HCT116 (cell line): ENCODE measurements at regions of chr17 and their contacts with region 1.

Region 1: DNA sequence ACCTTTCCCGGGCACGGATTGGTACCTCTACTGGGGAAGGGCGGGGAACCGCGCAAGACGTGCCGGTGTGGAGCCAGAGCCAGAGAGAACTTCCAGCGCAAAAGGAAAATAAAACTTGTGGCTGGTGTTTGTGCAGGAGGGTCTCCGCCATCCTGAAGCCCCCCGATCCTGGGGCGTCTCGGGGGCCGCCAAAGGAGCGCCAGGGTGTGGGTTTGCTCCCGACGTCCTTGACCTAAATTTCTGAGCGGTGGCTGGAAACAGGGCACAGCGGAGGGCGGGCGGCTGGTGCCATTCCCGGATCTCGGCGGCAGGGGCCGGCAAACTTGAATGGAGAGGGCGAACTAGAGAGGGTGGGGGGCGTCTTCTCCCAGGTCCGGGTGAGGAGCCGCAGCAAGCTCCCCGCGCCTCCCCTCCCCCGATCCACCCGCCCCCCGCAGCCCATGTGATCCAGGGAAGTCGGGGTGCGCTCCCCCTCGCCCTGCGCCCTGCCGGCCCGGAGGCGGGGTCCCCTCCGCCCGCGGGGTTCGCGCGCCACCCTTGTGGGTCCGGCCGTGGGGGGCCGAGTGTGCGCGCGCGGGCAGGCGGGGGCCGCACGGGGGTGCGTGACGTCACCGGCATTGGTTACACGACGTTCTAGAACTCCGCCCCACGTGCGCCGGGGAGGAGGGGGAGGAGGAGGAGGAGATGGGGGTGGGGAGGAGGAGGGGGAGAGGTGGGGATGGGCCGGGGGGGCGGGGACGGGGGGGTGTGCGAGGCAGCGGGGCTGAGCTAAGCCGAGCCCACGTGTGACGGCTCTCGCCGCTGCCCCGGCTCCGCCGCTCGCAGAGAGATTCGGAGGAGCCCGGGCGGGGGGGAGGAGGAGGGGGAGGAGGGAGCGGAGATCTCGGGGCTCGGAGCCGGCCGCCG is at the start of gene MSI2:
- DNase-seq: peak; percentile 75
- ATAC-seq: peak; percentile 82
- H3K4me3 ChIP-seq: peak within 1 kb of the TSS; percentile 65 to 72
- H3K27ac ChIP-seq: peak within 1 kb of the TSS; percentile 60
- H3K4me1 ChIP-seq: peaks cover 13 to 27% of the 10 kb centered on the region in 2 experiments
- H3K27me3 ChIP-seq: no peaks in the 10 kb centered on the region
- CTCF ChIP-seq: no peak
- POLR2A ChIP-seq: peak; percentile 34
- RAD21 ChIP-seq: no peak
- total RNA-seq, gene MSI2: 137 TPM

Region 2: GRCh38 chr17:57186226-57187019 is 69.6 kb before region 1 on chr17:
- CTCF ChIA-PET with region 1: no interaction called
- POLR2A ChIA-PET with region 1: no interaction called
- RAD21 ChIA-PET with region 1: no interaction called
- intact Hi-C with region 1: no loop called
- DNase-seq: no peak
- ATAC-seq: no peak
- H3K4me3 ChIP-seq: no peak overlapping the region
- H3K27ac ChIP-seq: no peak overlapping the region
- H3K4me1 ChIP-seq: no peaks in the 10 kb centered on the region
- H3K27me3 ChIP-seq: no peaks in the 10 kb centered on the region
- CTCF ChIP-seq: no peak
- POLR2A ChIP-seq: no peak
- RAD21 ChIP-seq: no peak

Region 3: GRCh38 chr17:57234751-57235117 is 21.3 kb before region 1 on chr17:
- CTCF ChIA-PET with region 1: no interaction called
- POLR2A ChIA-PET with region 1: no interaction called
- RAD21 ChIA-PET with region 1: no interaction called
- intact Hi-C with region 1: no loop called
- DNase-seq: no peak
- ATAC-seq: peak; percentile 38; the same call in 1 of the 2 replicates
- H3K4me3 ChIP-seq: no peak overlapping the region
- H3K27ac ChIP-seq: no peak overlapping the region
- H3K4me1 ChIP-seq: no peaks in the 10 kb centered on the region
- H3K27me3 ChIP-seq: no peaks in the 10 kb centered on the region
- CTCF ChIP-seq: peak in 2 of 3 experiments; percentile 15 to 16; a peak in 2 of 6 replicates
- POLR2A ChIP-seq: no peak
- RAD21 ChIP-seq: peak; percentile 20; the same call in 1 of the 2 replicates

Region 4: GRCh38 chr17:57370037-57370581 is 114.1 kb after region 1 on chr17:
- CTCF ChIA-PET with region 1: no interaction called
- POLR2A ChIA-PET with region 1: no interaction called
- RAD21 ChIA-PET with region 1: no interaction called
- intact Hi-C with region 1: loop called (anchors 5 kb)
- DNase-seq: no peak
- ATAC-seq: peak; percentile 27
- H3K4me3 ChIP-seq: no peak overlapping the region
- H3K27ac ChIP-seq: peak overlapping the region; percentile 11; the same call in 1 of the 2 replicates
- H3K4me1 ChIP-seq: peaks cover 63 to 86% of the 10 kb centered on the region in 2 experiments
- H3K27me3 ChIP-seq: no peaks in the 10 kb centered on the region
- CTCF ChIP-seq: no peak
- POLR2A ChIP-seq: no peak
- RAD21 ChIP-seq: no peak

Region 5: GRCh38 chr17:57422574-57423164 is 166.6 kb after region 1 on chr17:
- CTCF ChIA-PET with region 1: no interaction called
- POLR2A ChIA-PET with region 1: no interaction called
- RAD21 ChIA-PET with region 1: no interaction called
- intact Hi-C with region 1: loop called (anchors 5 kb)
- DNase-seq: peak; percentile 89
- ATAC-seq: peak; percentile 87
- H3K4me3 ChIP-seq: peak overlapping the region in 1 of 2 experiments; percentile 37; a peak in 2 of 4 replicates
- H3K27ac ChIP-seq: peak overlapping the region; percentile 78
- H3K4me1 ChIP-seq: peaks cover 70 to 71% of the 10 kb centered on the region in 2 experiments
- H3K27me3 ChIP-seq: no peaks in the 10 kb centered on the region
- CTCF ChIP-seq: no peak
- POLR2A ChIP-seq: no peak
- RAD21 ChIP-seq: peak; percentile 39; the same call in 1 of the 2 replicates

Region 6: DNA sequence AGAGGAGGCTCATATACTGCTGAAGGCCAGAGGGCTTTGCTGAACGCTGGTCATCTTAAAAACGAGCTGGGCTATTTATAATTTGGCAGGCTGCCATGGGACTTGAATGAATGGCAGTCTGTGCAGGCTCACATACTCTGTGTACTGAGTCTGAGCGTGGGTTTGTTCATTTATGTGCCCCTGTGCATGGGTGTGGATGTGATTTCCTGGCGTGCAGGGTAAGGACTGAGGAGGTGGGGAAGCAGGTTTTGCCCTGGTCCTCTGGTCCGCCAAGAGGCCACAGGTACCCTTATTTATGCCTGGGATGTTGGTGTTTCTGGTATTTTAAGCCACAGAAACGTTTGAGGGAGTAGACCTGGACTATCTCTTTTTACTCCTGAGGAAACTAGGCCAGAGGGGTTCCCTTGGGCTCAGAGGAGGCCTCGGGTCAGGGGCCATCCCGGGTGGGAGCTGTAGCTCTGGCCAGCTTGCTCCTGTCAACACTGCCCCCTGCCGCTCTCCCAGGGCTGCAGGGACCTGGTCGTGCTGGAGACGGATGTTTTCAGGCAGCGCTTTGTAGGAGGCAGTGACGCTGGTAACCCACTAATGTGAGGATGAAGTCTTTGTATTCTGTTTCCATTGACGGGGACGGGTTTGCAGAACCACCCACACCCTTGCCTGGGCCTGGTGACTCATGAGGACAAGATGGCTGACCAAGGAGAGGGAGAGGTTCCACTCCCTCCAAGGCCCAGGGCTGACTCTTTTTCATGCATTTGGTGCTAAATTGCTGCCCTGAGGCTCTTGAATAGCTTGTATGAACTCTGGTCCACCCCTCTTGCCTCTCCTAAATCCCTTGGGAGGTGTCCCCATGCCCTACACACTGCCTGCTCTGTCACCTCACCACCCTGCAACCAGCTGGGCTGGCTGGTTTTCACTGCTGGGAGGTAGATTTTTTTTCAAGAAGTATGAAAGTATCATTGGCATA is 184.8 kb after region 1 on chr17:
- CTCF ChIA-PET with region 1: no interaction called
- POLR2A ChIA-PET with region 1: no interaction called
- RAD21 ChIA-PET with region 1: interaction called in 1 of 2 experiments, 7 read pairs
- intact Hi-C with region 1: loop called (anchors 5 kb)
- DNase-seq: peak; percentile 76
- ATAC-seq: peak; percentile 86
- H3K4me3 ChIP-seq: peak overlapping the region in 1 of 2 experiments; percentile 23; a peak in 2 of 4 replicates
- H3K27ac ChIP-seq: peak overlapping the region; percentile 86
- H3K4me1 ChIP-seq: peaks cover 67 to 79% of the 10 kb centered on the region in 2 experiments
- H3K27me3 ChIP-seq: no peaks in the 10 kb centered on the region
- CTCF ChIP-seq: peak; percentile 94 to 95 (median 95)
- POLR2A ChIP-seq: no peak
- RAD21 ChIP-seq: peak; percentile 80

Region 7: GRCh38 chr17:57570724-57571344 is 314.8 kb after region 1 on chr17:
- CTCF ChIA-PET with region 1: no interaction called
- POLR2A ChIA-PET with region 1: no interaction called
- RAD21 ChIA-PET with region 1: no interaction called
- intact Hi-C with region 1: no loop called
- DNase-seq: no peak
- ATAC-seq: no peak
- H3K4me3 ChIP-seq: no peak overlapping the region
- H3K27ac ChIP-seq: no peak overlapping the region
- H3K4me1 ChIP-seq: peaks cover 0 to 4% of the 10 kb centered on the region in 2 experiments; a peak in 1 of 4 replicates
- H3K27me3 ChIP-seq: no peaks in the 10 kb centered on the region
- CTCF ChIP-seq: no peak
- POLR2A ChIP-seq: no peak
- RAD21 ChIP-seq: no peak